ENCODE measurements at regions of chr12 and their contacts with region 1.

Region 1: DNA sequence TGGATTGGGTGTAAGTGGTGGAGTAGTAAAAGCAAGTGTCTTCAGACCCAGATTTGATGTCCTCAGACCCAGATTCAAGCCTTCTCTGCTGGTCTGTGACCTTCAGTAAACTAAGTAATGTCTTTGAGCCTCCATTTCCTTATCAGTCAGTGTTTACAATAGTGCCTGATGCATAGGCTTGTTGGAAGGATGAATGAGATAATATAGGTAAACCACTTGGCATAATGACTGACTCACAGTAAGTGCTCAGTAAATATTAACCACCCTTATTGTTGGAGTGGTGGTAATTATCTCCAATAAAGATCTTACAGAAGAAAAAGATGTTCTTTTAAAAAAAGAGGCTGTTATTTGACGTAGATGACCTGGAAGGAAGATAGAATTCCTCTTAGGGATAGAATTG is 86.2 kb downstream of the IGF1 start:
- DNase-seq: no peak
- H3K4me3 ChIP-seq: no peak overlapping the region
- H3K27ac ChIP-seq: no peak overlapping the region
- H3K4me1 ChIP-seq: no peaks in the 10 kb centered on the region
- H3K27me3 ChIP-seq: peaks cover 4% of the 10 kb centered on the region
- CTCF ChIP-seq: no peak
- POLR2A ChIP-seq: no peak

Region 2: GRCh38 chr12:102421801-102422583 is 27.8 kb after region 1 on chr12:
- intact Hi-C with region 1: loop called (anchors 2 kb)
- DNase-seq: no peak
- H3K4me3 ChIP-seq: no peak overlapping the region
- H3K27ac ChIP-seq: no peak overlapping the region
- H3K4me1 ChIP-seq: peaks cover 1 to 7% of the 10 kb centered on the region in 2 donors
- H3K27me3 ChIP-seq: no peaks in the 10 kb centered on the region
- CTCF ChIP-seq: no peak
- POLR2A ChIP-seq: no peak

Region 3: GRCh38 chr12:102438047-102438826 is 44.0 kb after region 1 on chr12:
- intact Hi-C with region 1: no loop called
- DNase-seq: no peak
- H3K4me3 ChIP-seq: no peak overlapping the region
- H3K27ac ChIP-seq: no peak overlapping the region
- H3K4me1 ChIP-seq: peaks cover 16 to 25% of the 10 kb centered on the region in 2 donors
- H3K27me3 ChIP-seq: no peaks in the 10 kb centered on the region
- CTCF ChIP-seq: no peak
- POLR2A ChIP-seq: no peak